B cell (primary cell): ENCODE measurements at regions of chr3 and their contacts with region 1.

Region 1: GRCh38 chr3:194134757-194135528 is 1.0 kb upstream of the HES1 start:
- DNase-seq: peak; percentile 96
- ATAC-seq: peak; percentile 37
- H3K4me3 ChIP-seq: peak overlapping the region; percentile 48 to 80 (median 72)
- H3K4me3 Mint-ChIP-seq: peak overlapping the region; percentile 94
- H3K27ac ChIP-seq: peak overlapping the region; percentile 88 to 94
- H3K27ac Mint-ChIP-seq: peak overlapping the region; percentile 99
- H3K4me1 ChIP-seq: peaks cover 66 to 83% of the 10 kb centered on the region in 2 donors
- H3K4me1 Mint-ChIP-seq: peaks cover 72% of the 10 kb centered on the region
- H3K27me3 ChIP-seq: no peaks in the 10 kb centered on the region
- H3K27me3 Mint-ChIP-seq: peaks cover 4% of the 10 kb centered on the region
- CTCF ChIP-seq: no peak

Region 2: GRCh38 chr3:193665370-193665989 is 469.5 kb before region 1 on chr3:
- CTCF ChIA-PET with region 1: interaction called, 121 read pairs
- POLR2A ChIA-PET with region 1: no interaction called
- intact Hi-C with region 1: loop called (anchors 1 kb)
- DNase-seq: peak; percentile 60
- ATAC-seq: no peak
- H3K4me3 ChIP-seq: no peak overlapping the region
- H3K4me3 Mint-ChIP-seq: no peak overlapping the region
- H3K27ac ChIP-seq: no peak overlapping the region
- H3K27ac Mint-ChIP-seq: no peak overlapping the region
- H3K4me1 ChIP-seq: no peaks in the 10 kb centered on the region
- H3K4me1 Mint-ChIP-seq: peaks cover 7% of the 10 kb centered on the region
- H3K27me3 ChIP-seq: no peaks in the 10 kb centered on the region
- H3K27me3 Mint-ChIP-seq: no peaks in the 10 kb centered on the region
- CTCF ChIP-seq: peak; percentile 86

Region 3: DNA sequence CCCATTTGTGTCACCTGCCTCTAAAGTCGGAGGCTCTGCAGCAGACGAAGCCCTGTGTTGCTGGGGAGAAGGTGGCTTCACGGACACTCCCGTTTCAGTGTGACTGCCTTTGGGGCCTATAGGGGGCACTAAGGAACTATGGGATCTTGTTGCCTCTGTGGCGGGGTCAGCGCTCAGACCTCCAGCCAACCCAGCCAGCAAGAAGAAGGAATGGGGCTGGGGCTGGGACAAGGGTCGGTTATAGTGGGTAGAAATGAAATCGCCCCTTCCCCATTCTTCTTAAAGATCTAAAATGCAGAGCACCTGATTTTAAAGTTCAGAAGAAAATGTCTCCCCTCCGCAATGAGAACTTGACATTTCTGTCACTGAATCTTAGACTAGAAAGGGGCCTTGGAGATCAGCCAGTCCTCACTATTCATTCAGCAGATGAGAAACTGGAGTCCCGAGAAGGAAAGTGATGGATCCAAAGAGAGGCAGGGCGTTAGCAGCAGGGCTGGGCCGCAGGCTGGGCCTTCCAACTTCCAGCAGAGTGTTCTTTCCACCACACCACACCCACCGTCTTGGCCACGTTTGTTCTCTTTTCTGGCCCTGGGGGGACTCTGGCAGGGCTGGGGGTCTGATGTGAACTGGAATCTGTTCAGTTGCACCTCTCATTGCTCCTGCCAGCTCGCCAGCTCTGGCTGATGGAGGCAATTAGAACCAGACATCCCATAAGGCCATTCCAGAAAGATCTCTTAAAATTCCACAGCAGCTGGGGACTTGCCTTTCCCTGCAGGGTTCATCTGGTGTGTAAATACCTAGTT is 346.6 kb before region 1 on chr3:
- CTCF ChIA-PET with region 1: interaction called, 83 read pairs
- POLR2A ChIA-PET with region 1: no interaction called
- intact Hi-C with region 1: loop called (anchors 1 kb)
- DNase-seq: peak; percentile 79
- ATAC-seq: peak; percentile 88
- H3K4me3 ChIP-seq: no peak overlapping the region
- H3K4me3 Mint-ChIP-seq: no peak overlapping the region
- H3K27ac ChIP-seq: no peak overlapping the region
- H3K27ac Mint-ChIP-seq: peak overlapping the region; percentile 57
- H3K4me1 ChIP-seq: peaks cover 12 to 17% of the 10 kb centered on the region in 2 donors
- H3K4me1 Mint-ChIP-seq: peaks cover 14% of the 10 kb centered on the region
- H3K27me3 ChIP-seq: peaks cover 0 to 44% (median 5%) of the 10 kb centered on the region in 4 experiments
- H3K27me3 Mint-ChIP-seq: peaks cover 54% of the 10 kb centered on the region
- CTCF ChIP-seq: peak; percentile 82

Region 4: DNA sequence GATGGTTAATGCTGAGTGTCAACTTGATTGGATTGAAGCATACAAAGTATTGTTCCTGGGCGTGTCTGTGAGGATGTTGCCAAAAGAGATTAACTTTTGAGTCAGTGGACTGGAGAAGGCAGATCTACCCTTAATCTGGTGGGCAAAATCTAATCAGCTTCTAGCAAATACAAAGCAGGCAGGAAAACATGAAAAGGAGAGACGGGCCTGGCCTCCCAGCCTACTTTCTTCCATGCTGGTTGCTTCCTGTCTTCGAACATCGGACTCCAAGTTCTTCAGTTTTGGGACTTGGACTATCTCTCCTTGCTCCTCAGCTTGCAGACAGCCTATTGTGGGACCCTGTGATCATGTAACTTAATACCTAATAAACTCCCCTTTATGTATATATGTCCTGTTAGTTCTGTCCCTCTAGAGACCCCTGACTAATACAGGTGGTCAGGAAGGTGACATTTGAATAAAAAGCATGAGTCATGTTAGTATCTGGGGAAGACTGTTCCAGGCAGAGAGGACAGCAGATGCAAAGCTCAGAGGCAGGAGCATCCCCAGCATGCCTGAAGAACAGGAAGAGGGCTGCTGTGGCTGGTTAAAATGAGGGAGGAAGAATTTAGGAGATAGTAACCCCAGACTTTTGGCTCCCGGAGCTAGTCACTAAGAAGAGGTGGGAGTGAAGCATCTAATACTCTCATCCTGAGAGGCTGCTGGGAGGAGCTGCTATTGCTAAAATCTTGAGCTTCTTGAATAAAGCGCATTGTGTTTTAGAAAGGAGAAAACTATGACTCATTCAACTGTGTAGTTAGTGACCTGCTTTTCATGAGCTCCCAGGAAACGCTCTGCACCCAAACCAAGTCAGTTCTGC is 206.4 kb before region 1 on chr3:
- CTCF ChIA-PET with region 1: no interaction called
- POLR2A ChIA-PET with region 1: no interaction called
- intact Hi-C with region 1: no loop called
- DNase-seq: no peak
- ATAC-seq: no peak
- H3K4me3 ChIP-seq: no peak overlapping the region
- H3K4me3 Mint-ChIP-seq: no peak overlapping the region
- H3K27ac ChIP-seq: no peak overlapping the region
- H3K27ac Mint-ChIP-seq: no peak overlapping the region
- H3K4me1 ChIP-seq: peaks cover 0 to 9% of the 10 kb centered on the region in 2 donors
- H3K4me1 Mint-ChIP-seq: peaks cover 7% of the 10 kb centered on the region
- H3K27me3 ChIP-seq: peaks cover 0 to 4% (median 2%) of the 10 kb centered on the region in 4 experiments
- H3K27me3 Mint-ChIP-seq: peaks cover 6% of the 10 kb centered on the region
- CTCF ChIP-seq: no peak

Region 5: GRCh38 chr3:193971261-193971751 is 163.6 kb before region 1 on chr3:
- CTCF ChIA-PET with region 1: interaction called, 43 read pairs
- POLR2A ChIA-PET with region 1: interaction called, 5 read pairs
- intact Hi-C with region 1: loop called (anchors 1 kb)
- DNase-seq: peak; percentile 86
- ATAC-seq: peak; percentile 97
- H3K4me3 ChIP-seq: peak overlapping the region in 3 of 5 experiments; percentile 16 to 43 (median 40)
- H3K4me3 Mint-ChIP-seq: peak overlapping the region; percentile 84
- H3K27ac ChIP-seq: peak overlapping the region; percentile 13 to 28
- H3K27ac Mint-ChIP-seq: peak overlapping the region; percentile 85
- H3K4me1 ChIP-seq: peaks cover 17 to 22% of the 10 kb centered on the region in 2 donors
- H3K4me1 Mint-ChIP-seq: peaks cover 26% of the 10 kb centered on the region
- H3K27me3 ChIP-seq: peaks cover 0 to 15% (median 4%) of the 10 kb centered on the region in 4 experiments
- H3K27me3 Mint-ChIP-seq: peaks cover 17% of the 10 kb centered on the region
- CTCF ChIP-seq: no peak

Region 6: GRCh38 chr3:194070634-194071409 is 64.1 kb before region 1 on chr3:
- CTCF ChIA-PET with region 1: interaction called, 30 read pairs
- POLR2A ChIA-PET with region 1: interaction called, 11 read pairs
- intact Hi-C with region 1: loop called (anchors 1 kb)
- DNase-seq: peak; percentile 96
- ATAC-seq: peak; percentile 94
- H3K4me3 ChIP-seq: peak overlapping the region; percentile 30 to 64 (median 52)
- H3K4me3 Mint-ChIP-seq: peak overlapping the region; percentile 85
- H3K27ac ChIP-seq: peak overlapping the region in 1 of 2 donors; percentile 59
- H3K27ac Mint-ChIP-seq: peak overlapping the region; percentile 87
- H3K4me1 ChIP-seq: peaks cover 15 to 22% of the 10 kb centered on the region in 2 donors
- H3K4me1 Mint-ChIP-seq: peaks cover 34% of the 10 kb centered on the region
- H3K27me3 ChIP-seq: no peaks in the 10 kb centered on the region
- H3K27me3 Mint-ChIP-seq: no peaks in the 10 kb centered on the region
- CTCF ChIP-seq: no peak

Region 7: GRCh38 chr3:194306109-194306686 is 171.3 kb after region 1 on chr3:
- CTCF ChIA-PET with region 1: interaction called, 20 read pairs
- POLR2A ChIA-PET with region 1: interaction called, 13 read pairs
- intact Hi-C with region 1: loop called (anchors 1 kb)
- DNase-seq: peak; percentile 89
- ATAC-seq: peak; percentile 63
- H3K4me3 ChIP-seq: peak overlapping the region in 3 of 5 experiments; percentile 7 to 57 (median 27)
- H3K4me3 Mint-ChIP-seq: peak overlapping the region; percentile 71
- H3K27ac ChIP-seq: peak overlapping the region; percentile 95 to 98
- H3K27ac Mint-ChIP-seq: peak overlapping the region; percentile 91
- H3K4me1 ChIP-seq: peaks cover 50 to 61% of the 10 kb centered on the region in 2 donors
- H3K4me1 Mint-ChIP-seq: peaks cover 51% of the 10 kb centered on the region
- H3K27me3 ChIP-seq: peaks cover 0 to 5% (median 2%) of the 10 kb centered on the region in 4 experiments
- H3K27me3 Mint-ChIP-seq: peaks cover 5% of the 10 kb centered on the region
- CTCF ChIP-seq: no peak